ENCODE measurements at regions of chr1 and their contacts with region 1.

Region 1: DNA sequence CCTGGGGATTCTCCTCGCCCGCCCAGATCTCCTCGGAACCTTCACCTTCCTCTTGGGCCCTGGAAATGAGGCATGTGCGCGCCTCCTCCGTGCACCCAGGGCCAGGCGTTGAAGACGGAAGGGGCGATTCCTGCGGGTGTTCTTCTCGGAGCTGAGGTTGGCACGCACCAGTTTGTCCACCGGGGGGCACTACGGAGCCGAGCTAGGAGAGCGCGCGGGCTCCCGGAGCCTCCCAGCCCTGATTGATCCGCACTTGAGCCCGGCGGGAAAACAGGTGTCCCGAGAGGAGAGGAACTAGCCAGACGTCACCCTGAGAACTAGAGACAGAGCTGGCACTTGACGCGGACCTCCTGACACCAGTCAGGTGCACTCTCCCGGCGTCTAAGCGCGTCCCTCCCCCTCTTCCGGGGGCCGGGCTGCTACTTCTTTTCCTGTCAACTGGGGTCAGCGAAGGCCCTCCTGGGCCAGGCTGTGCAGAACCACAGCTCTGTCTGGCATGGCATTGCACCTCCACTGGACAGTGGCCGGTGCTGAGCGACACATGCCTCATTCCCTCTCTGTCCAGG is 18.3 kb upstream of the SERINC2 start:
- DNase-seq: no peak
- H3K4me3 ChIP-seq: peak overlapping the region; percentile 12; the same call in 1 of the 2 replicates
- CTCF ChIP-seq: peak; percentile 90

Region 2: DNA sequence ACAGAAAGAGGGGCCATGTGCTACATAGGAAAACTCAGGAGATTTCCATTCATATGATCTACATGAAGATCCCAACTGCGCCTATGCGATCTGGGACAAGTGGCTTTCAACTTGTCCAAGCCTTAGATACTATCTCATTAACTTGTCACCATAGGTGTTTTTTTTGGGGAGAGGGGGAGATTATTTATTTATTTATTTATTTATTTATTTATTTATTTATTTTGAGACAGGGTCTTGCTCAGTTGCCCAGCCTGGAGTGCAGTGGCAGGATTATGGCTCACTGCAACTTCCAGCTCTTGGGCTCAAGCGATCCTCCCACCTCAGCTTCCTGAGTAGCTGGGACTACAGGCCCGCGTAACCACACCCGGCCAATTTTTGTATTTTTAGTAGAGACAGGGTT is 33.1 kb before region 1 on chr1:
- CTCF ChIA-PET with region 1: interaction called, 13 read pairs
- POLR2A ChIA-PET with region 1: no interaction called
- DNase-seq: no peak
- H3K4me3 ChIP-seq: no peak overlapping the region
- CTCF ChIP-seq: no peak

Region 3: GRCh38 chr1:31372961-31373896 is 21.5 kb before region 1 on chr1 and contains the start of gene FABP3:
- CTCF ChIA-PET with region 1: interaction called, 84 read pairs
- POLR2A ChIA-PET with region 1: interaction called, 5 read pairs
- DNase-seq: no peak
- H3K4me3 ChIP-seq: peak within 1 kb of the TSS; percentile 54
- CTCF ChIP-seq: no peak

Region 4: GRCh38 chr1:31382379-31382989 is 12.2 kb before region 1 on chr1:
- CTCF ChIA-PET with region 1: interaction called, 84 read pairs
- POLR2A ChIA-PET with region 1: no interaction called
- DNase-seq: no peak
- H3K4me3 ChIP-seq: no peak overlapping the region
- CTCF ChIP-seq: no peak

Region 5: DNA sequence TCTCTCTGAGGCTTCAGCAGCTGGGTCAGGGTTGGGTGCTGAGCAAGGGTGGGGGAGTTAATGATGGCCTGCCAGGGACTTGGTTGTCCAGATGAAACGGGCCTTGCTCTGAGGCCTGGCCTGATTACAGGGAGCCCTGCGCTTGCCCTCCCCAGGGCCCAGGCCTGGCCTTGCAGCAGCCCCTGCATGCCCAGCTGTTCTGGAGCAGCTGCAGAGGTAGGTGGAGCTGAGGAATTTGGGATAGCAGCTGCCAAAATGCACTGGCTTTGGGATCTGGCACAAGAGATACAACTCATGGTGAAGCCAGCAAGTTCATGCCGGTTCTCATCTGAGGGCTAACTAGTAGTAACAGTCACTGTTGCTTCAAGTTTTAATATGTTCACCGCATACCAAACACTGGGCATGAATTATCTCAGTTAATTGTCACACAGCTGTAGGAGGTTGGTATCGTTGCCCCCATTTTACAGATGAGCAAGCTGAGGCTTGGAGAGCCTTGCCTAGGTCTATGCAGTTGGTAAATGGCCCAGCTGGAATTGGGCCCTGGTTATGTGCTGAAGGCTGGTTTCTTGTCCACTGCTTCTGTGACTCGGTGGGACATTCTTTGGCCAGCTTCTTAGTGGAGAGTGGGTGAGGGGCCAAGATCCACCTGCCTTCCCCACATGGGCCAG is 11.0 kb after region 1 on chr1:
- CTCF ChIA-PET with region 1: interaction called, 640 read pairs
- POLR2A ChIA-PET with region 1: interaction called, 10 read pairs
- DNase-seq: no peak
- H3K4me3 ChIP-seq: no peak overlapping the region
- CTCF ChIP-seq: no peak

Region 6: GRCh38 chr1:31413405-31414125 is 18.9 kb after region 1 on chr1:
- CTCF ChIA-PET with region 1: interaction called, 640 read pairs
- POLR2A ChIA-PET with region 1: interaction called, 10 read pairs
- DNase-seq: no peak
- H3K4me3 ChIP-seq: peak overlapping the region; percentile 58
- CTCF ChIP-seq: no peak

Region 7: GRCh38 chr1:31422505-31423319 is 28.0 kb after region 1 on chr1:
- CTCF ChIA-PET with region 1: interaction called, 640 read pairs
- POLR2A ChIA-PET with region 1: interaction called, 3 read pairs
- DNase-seq: no peak
- H3K4me3 ChIP-seq: no peak overlapping the region
- CTCF ChIP-seq: peak; percentile 92

Measured in AG04449 (cell line).